ENCODE measurements at regions of chr3 and their contacts with region 1.

Region 1: DNA sequence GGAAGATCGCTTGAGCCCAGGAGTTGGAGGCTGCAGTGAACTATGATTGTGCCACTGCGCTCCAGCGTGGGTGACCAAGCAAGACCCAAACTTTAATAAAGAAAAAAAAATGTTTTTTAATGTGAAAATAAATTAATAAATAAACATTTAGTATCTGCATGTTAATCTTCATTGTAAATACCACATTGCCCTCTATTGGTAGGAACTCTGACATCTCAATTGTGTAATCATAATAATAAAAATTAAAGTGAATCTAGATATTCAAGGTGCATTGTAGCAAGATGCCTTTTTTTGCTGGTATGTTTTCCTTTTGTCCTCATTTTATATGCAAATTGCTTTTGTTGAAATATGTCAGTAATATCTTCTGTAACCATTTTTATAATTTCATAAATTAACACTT is 95.0 kb upstream of the LIMD1 start:
- DNase-seq: no peak
- H3K4me3 ChIP-seq: no peak overlapping the region
- H3K27ac ChIP-seq: no peak overlapping the region
- H3K27me3 ChIP-seq: no peaks in the 10 kb centered on the region
- CTCF ChIP-seq: peak; percentile 48

Region 2: GRCh38 chr3:45037734-45038455 is 461.6 kb before region 1 on chr3:
- CTCF ChIA-PET with region 1: interaction called, 287 read pairs
- POLR2A ChIA-PET with region 1: no interaction called
- DNase-seq: peak; percentile 87
- H3K4me3 ChIP-seq: no peak overlapping the region
- H3K27ac ChIP-seq: no peak overlapping the region
- H3K27me3 ChIP-seq: no peaks in the 10 kb centered on the region
- CTCF ChIP-seq: peak; percentile 89

Region 3: DNA sequence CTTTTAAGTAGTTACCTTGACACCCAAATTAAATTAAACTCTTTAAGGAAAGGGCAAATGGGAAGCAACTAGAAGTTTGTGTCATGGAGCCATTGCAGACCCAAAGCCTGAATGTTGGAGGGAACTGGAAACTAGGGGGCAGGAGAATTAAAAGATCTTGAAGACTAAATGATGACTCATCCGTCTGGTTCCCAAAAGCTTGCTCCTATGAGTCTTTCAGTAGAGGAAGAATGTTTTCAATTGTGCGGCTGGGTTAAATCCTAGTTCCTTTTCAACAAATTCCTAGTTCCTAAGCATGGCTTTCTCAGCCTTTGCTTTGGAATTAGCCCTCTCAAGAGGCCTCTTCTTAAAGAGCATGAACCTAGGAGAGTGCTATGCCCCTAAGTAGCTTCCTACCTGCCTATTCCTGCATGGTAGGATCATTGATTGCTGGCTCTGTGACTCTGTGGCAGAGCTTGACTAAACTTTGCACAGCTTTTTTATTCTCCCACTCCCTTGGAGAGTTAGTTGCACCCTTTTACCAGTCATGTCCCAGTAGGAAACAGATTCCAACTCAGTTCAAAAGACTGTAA is 455.7 kb before region 1 on chr3:
- CTCF ChIA-PET with region 1: interaction called, 287 read pairs
- POLR2A ChIA-PET with region 1: no interaction called
- DNase-seq: peak; percentile 66
- H3K4me3 ChIP-seq: no peak overlapping the region
- H3K27ac ChIP-seq: peak overlapping the region; percentile 66
- H3K27me3 ChIP-seq: no peaks in the 10 kb centered on the region
- CTCF ChIP-seq: peak; percentile 52